ENCODE measurements at regions of chrX and their contacts with region 1.

Region 1: GRCh38 chrX:55488593-55489313 is 895 bp downstream of the USP51 start:
- DNase-seq: peak; percentile 8
- ATAC-seq: peak; percentile 79
- H3K4me3 ChIP-seq: peak overlapping the region; percentile 72
- H3K27ac ChIP-seq: peak overlapping the region; percentile 57
- H3K4me1 ChIP-seq: no peaks in the 10 kb centered on the region
- H3K27me3 ChIP-seq: no peaks in the 10 kb centered on the region
- CTCF ChIP-seq: peak in 1 of 3 experiments; percentile 13; a peak in 1 of 6 replicates
- EP300 ChIP-seq: 0 out of 4 replicates have a peak, but pooled peaks of 1 of the 2 experiments have one; percentile 14
- POLR2A ChIP-seq: peak; percentile 60; the same call in 1 of the 2 replicates
- RAD21 ChIP-seq: no peak

Region 2: GRCh38 chrX:55451990-55452832 is 36.5 kb before region 1 on chrX and contains the start of gene MAGEH1:
- CTCF ChIA-PET with region 1: interaction called, 4 read pairs
- POLR2A ChIA-PET with region 1: interaction called, 12 read pairs
- RAD21 ChIA-PET with region 1: interaction called, 15 read pairs
- SMC1A ChIA-PET with region 1: interaction called, 7 read pairs
- in situ Hi-C with region 1: no loop called
- intact Hi-C with region 1: no loop called
- DNase-seq: peak; percentile 55
- ATAC-seq: peak; percentile 98
- H3K4me3 ChIP-seq: peak within 1 kb of the TSS; percentile 84
- H3K27ac ChIP-seq: peak within 1 kb of the TSS; percentile 55
- H3K4me1 ChIP-seq: no peaks in the 10 kb centered on the region
- H3K27me3 ChIP-seq: no peaks in the 10 kb centered on the region
- CTCF ChIP-seq: no peak
- EP300 ChIP-seq: no peak
- POLR2A ChIP-seq: peak; percentile 83
- RAD21 ChIP-seq: no peak
- polyA plus RNA-seq, gene MAGEH1: 8.7 to 9.1 TPM

Measured in GM12878 (cell line).